Activated CD4-positive, alpha-beta T cell treated with anti-CD3 and anti-CD28 coated beads for 36 hours (primary cell): ENCODE measurements at regions of chr3 and their contacts with region 1.

Region 1: DNA sequence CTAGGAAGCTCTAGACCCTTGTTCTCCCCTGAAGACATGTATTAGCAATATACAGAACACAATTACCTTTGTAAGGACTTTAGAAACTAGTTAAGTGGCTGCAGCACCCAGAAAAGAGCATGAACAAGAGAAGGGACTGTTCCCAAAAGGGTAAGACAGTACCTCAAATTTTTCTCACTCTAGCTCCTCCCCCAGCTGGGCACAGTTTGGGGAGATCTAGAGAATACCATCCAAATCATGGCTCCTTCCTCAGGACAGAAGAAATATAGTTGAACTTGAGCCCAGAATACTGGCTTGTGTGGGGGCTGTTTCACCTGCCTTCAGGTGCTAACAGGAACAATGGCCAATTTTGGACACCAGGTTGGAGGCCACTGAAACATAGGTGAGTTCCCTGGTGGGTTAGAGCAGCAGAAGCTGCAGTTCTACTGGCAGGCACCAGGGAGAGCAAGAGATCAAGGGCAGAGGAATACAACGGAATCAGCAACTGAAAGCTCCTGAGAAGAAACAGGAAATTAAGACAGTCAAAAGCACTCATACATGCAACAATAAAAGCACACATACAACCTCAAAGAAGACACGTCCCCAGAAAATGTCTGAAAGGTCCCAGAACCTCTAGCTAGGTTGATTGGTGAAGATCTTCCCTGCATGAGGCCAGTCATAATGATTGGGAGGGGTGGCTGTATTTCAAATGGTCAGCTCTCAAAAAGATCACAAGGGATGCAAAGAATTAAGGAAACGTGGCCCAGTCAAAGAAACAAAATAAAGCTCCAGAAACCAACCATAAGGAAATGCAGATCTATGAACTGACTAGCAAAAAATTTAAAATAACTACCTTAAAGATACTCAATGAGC is 104.9 kb upstream of the ASB14 start:
- DNase-seq: peak; percentile 79
- ATAC-seq: peak; percentile 99
- H3K4me3 Mint-ChIP-seq: peak overlapping the region; percentile 7
- H3K27ac Mint-ChIP-seq: peak overlapping the region; percentile 48
- H3K4me1 Mint-ChIP-seq: peaks cover 14% of the 10 kb centered on the region
- H3K27me3 Mint-ChIP-seq: peaks cover 8% of the 10 kb centered on the region

Region 2: GRCh38 chr3:57169872-57170623 is 227.4 kb before region 1 on chr3:
- CTCF ChIA-PET with region 1: interaction called, 5 read pairs
- POLR2A ChIA-PET with region 1: no interaction called
- intact Hi-C with region 1: loop called in 1 of 2 experiments (anchors 5 kb)
- DNase-seq: peak; percentile 85
- ATAC-seq: peak; percentile 86
- H3K4me3 Mint-ChIP-seq: peak overlapping the region; percentile 55
- H3K27ac Mint-ChIP-seq: no peak overlapping the region
- H3K4me1 Mint-ChIP-seq: peaks cover 4% of the 10 kb centered on the region
- H3K27me3 Mint-ChIP-seq: peaks cover 42% of the 10 kb centered on the region

Region 3: DNA sequence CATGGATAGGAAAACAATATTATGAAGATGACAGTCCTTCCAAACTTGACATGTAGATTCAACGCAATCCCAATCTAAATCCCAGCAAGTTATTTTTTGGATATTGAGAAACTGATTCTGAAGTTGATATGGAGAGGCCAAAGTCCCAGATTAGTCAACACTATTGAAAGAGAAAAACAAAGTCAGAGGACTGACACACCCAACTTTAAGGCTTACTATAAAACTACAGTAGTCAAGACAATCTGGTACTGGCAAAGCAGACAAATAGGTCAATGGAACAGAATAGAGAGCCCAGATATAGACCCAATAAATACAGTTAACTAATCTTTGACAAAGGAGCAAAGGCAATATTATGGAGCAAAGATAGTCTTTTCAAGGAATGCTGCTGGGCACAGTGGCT is 14.3 kb after region 1 on chr3:
- CTCF ChIA-PET with region 1: interaction called, 20 read pairs
- POLR2A ChIA-PET with region 1: no interaction called
- intact Hi-C with region 1: no loop called
- DNase-seq: no peak
- ATAC-seq: no peak
- H3K4me3 Mint-ChIP-seq: no peak overlapping the region
- H3K27ac Mint-ChIP-seq: no peak overlapping the region
- H3K4me1 Mint-ChIP-seq: peaks cover 3% of the 10 kb centered on the region
- H3K27me3 Mint-ChIP-seq: peaks cover 2% of the 10 kb centered on the region

Region 4: DNA sequence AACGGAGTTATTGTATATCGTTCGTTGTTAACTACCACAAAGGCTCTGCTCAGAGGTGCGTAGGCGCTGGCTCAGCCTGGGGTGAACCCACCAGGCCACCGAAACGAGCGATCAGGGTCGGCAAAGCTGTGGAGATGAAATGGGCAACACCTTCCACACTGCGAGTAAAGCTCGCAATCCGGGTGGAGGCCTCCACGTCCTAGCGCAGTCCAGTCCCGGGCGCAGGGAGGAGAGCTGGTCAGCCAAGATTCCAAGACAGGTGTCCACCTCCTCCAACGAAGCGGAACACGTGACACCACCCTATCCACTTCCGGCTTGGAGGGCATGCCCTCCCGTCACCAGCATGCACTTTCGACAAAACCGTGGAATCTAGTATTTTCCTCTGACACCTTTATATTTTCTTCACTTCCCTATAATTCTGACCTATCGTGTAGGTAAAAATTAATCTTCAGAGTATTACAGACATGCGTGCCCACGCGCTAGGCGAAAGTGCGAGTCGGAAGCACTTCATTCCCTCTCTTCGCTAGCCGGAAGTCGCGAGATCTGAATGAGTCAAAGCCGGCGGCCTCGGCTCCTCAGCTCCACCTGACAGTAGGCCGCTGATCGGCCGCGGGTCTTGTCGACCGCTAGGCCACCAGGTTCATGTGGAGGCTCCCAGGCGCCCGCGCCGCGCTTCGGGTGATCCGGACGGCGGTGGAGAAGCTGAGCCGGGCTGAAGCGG is 158.5 kb after region 1 on chr3 and contains the start of gene PDE12:
- CTCF ChIA-PET with region 1: interaction called, 8 read pairs
- POLR2A ChIA-PET with region 1: interaction called, 5 read pairs
- intact Hi-C with region 1: loop called in 1 of 2 experiments (anchors 1 kb)
- DNase-seq: peak; percentile 91
- ATAC-seq: peak; percentile 82
- H3K4me3 Mint-ChIP-seq: peak within 1 kb of the TSS; percentile 91
- H3K27ac Mint-ChIP-seq: peak within 1 kb of the TSS; percentile 100
- H3K4me1 Mint-ChIP-seq: peaks cover 29% of the 10 kb centered on the region
- H3K27me3 Mint-ChIP-seq: no peaks in the 10 kb centered on the region
- total RNA-seq, gene PDE12: 19.2 to 19.9 TPM

Region 5: DNA sequence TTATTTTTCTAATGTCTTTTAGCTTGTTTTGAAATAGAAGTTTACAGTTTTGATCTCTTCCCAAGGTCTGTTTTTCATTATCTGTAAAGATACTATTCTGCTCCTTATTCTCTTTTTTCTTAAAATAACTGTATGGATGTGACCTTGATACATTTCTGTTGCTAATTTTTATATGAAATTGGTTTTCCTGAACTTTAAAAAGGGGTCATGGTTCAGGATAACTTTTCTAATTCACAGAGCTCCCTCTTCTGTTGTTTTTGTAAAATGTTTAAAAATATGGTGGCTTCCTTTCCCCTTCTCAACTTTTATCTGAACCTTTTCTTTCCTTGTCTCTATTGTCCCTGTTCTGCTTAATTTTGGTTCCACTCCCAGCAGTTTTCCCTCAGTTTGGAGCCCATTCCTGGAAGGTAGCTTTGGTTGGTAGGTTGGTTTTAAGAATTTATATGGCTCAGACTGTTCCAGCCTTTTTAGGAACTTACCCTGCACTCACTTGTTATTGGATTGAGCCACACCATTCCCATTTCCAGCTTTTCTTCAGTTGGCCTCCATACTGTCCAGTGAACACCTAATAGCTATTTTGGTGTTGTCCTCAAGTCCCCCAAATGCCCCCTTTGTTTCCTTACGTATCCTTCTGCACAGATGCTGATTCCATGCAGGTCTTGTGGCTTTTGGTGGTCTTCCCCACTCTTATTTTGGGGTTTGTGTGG is 429.0 kb after region 1 on chr3:
- CTCF ChIA-PET with region 1: interaction called, 4 read pairs
- POLR2A ChIA-PET with region 1: no interaction called
- intact Hi-C with region 1: loop called in 1 of 2 experiments (anchors 10 kb)
- DNase-seq: no peak
- ATAC-seq: no peak
- H3K4me3 Mint-ChIP-seq: no peak overlapping the region
- H3K27ac Mint-ChIP-seq: no peak overlapping the region
- H3K4me1 Mint-ChIP-seq: peaks cover 17% of the 10 kb centered on the region
- H3K27me3 Mint-ChIP-seq: no peaks in the 10 kb centered on the region